ENCODE measurements at regions of chr9 and their contacts with region 1.

Region 1: GRCh38 chr9:69364510-69365150 is 39.6 kb downstream of the ENTREP1 start:
- DNase-seq: no peak
- ATAC-seq: no peak
- H3K4me3 ChIP-seq: no peak overlapping the region
- H3K27ac ChIP-seq: no peak overlapping the region
- H3K4me1 ChIP-seq: no peaks in the 10 kb centered on the region
- H3K27me3 ChIP-seq: no peaks in the 10 kb centered on the region
- CTCF ChIP-seq: no peak
- EP300 ChIP-seq: no peak
- POLR2A ChIP-seq: no peak
- RAD21 ChIP-seq: no peak

Region 2: DNA sequence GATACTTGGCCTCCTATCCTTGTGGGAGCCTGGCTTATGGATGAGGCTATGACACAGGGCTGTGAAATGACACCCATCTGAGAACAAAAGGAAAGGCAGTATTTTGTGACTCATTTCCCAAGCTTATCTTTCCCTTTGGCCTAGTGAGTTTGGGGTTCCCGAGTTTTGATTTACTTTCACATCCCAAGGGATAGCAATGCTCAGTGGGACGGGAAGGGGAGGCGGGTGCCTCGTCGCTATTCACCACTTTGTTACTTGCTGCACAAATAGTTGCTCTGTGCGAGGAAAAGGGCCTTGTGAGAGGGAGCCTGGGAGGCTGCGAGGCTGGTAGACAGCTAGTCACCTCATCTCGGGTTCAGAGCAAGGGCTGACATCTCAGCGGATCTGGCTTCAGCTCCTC is 98.7 kb before region 1 on chr9:
- CTCF ChIA-PET with region 1: no interaction called
- POLR2A ChIA-PET with region 1: no interaction called
- in situ Hi-C with region 1: no loop called
- intact Hi-C with region 1: loop called (anchors 10 kb)
- DNase-seq: no peak
- ATAC-seq: no peak
- H3K4me3 ChIP-seq: no peak overlapping the region
- H3K27ac ChIP-seq: no peak overlapping the region
- H3K4me1 ChIP-seq: no peaks in the 10 kb centered on the region; a peak in 1 of 5 replicates
- H3K27me3 ChIP-seq: peaks cover 10 to 21% of the 10 kb centered on the region in 2 experiments
- CTCF ChIP-seq: no peak
- EP300 ChIP-seq: no peak
- POLR2A ChIP-seq: no peak
- RAD21 ChIP-seq: no peak